Activated B cell treated with CpG ODN at 0.5 μM for 24 hours (primary cell): ENCODE measurements at regions of chr17 and their contacts with region 1.

Region 1: DNA sequence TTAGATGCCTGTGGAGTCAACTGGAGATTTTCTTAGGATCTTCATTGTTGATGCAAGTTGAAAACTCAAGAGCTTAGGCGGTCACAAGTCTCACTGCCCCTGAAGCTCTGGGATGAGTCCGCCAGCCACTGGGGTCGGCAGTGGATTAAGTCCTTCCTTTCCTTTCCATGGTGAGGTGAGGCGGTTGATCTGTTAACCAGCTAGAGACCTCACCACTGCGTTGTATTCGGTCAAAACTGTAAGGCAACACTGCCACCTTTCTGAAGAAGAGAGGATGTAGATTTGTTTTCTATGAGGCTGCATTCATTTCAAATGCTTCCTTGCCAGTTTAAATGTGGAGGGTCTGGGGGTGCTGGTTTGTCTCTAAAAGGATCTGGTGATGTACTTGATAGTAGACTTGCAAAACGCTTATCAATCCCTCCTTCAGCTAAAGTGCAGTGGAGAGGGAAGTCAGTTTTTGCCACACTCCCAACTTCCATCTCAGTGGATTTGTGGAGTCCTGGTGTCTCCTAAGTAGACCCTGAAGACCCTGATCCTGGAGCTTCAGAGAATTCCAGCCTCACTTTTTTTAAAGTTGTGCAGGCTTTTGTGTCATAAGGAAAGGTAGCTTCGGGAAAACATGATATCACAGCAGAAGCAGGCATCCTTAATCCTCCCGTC is 1.7 kb downstream of the MYOCD start:
- DNase-seq: peak; percentile 15
- ATAC-seq: peak; percentile 57
- H3K4me3 Mint-ChIP-seq: peak overlapping the region; percentile 62
- H3K27ac Mint-ChIP-seq: peak overlapping the region; percentile 27
- H3K4me1 Mint-ChIP-seq: peaks cover 11% of the 10 kb centered on the region
- H3K27me3 Mint-ChIP-seq: peaks cover 48% of the 10 kb centered on the region
- CTCF ChIP-seq: no peak

Region 2: GRCh38 chr17:10875979-10876555 is 1791.4 kb before region 1 on chr17:
- CTCF ChIA-PET with region 1: no interaction called
- POLR2A ChIA-PET with region 1: no interaction called
- intact Hi-C with region 1: loop called (anchors 10 kb)
- DNase-seq: no peak
- ATAC-seq: no peak
- H3K4me3 Mint-ChIP-seq: no peak overlapping the region
- H3K27ac Mint-ChIP-seq: no peak overlapping the region
- H3K4me1 Mint-ChIP-seq: no peaks in the 10 kb centered on the region
- H3K27me3 Mint-ChIP-seq: peaks cover 20% of the 10 kb centered on the region
- CTCF ChIP-seq: no peak

Region 3: GRCh38 chr17:12256380-12256995 is 410.9 kb before region 1 on chr17:
- CTCF ChIA-PET with region 1: interaction called, 69 read pairs
- POLR2A ChIA-PET with region 1: interaction called, 3 read pairs
- intact Hi-C with region 1: loop called (anchors 1 kb)
- DNase-seq: no peak
- ATAC-seq: peak; percentile 69
- H3K4me3 Mint-ChIP-seq: no peak overlapping the region
- H3K27ac Mint-ChIP-seq: no peak overlapping the region
- H3K4me1 Mint-ChIP-seq: peaks cover 6% of the 10 kb centered on the region
- H3K27me3 Mint-ChIP-seq: no peaks in the 10 kb centered on the region
- CTCF ChIP-seq: peak; percentile 13

Region 4: DNA sequence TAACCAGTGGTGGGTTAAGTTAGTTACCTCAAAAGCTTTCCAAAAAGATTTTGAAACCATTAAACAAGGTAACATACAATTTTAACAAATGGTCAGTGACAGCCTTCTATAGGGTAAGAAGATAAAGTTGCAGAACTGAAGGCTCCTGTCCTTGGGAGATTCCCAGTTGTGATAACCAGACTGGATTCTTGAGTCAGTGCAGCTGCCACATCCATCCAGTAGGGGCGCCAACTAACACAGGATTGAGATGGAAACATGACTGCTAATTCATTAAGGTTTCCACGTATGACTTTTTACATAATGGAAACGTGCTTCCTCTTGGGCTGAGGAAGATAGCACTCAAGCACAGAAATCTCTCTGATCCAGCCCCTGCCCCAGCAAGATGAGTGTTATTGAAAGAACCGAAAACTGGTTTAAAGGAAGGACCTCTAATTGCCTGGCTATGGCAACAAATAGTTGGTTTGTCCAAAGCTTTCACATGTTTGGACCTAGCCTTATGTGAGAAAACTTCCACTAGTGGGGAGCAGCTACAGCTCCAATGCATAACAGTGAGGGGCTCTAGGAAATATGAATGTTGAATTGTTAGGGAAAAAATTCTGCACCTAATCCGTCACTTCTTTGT is 271.6 kb before region 1 on chr17:
- CTCF ChIA-PET with region 1: interaction called, 3 read pairs
- POLR2A ChIA-PET with region 1: no interaction called
- intact Hi-C with region 1: loop called (anchors 1 kb)
- DNase-seq: no peak
- ATAC-seq: peak; percentile 47
- H3K4me3 Mint-ChIP-seq: no peak overlapping the region
- H3K27ac Mint-ChIP-seq: no peak overlapping the region
- H3K4me1 Mint-ChIP-seq: no peaks in the 10 kb centered on the region
- H3K27me3 Mint-ChIP-seq: no peaks in the 10 kb centered on the region
- CTCF ChIP-seq: no peak

Region 5: DNA sequence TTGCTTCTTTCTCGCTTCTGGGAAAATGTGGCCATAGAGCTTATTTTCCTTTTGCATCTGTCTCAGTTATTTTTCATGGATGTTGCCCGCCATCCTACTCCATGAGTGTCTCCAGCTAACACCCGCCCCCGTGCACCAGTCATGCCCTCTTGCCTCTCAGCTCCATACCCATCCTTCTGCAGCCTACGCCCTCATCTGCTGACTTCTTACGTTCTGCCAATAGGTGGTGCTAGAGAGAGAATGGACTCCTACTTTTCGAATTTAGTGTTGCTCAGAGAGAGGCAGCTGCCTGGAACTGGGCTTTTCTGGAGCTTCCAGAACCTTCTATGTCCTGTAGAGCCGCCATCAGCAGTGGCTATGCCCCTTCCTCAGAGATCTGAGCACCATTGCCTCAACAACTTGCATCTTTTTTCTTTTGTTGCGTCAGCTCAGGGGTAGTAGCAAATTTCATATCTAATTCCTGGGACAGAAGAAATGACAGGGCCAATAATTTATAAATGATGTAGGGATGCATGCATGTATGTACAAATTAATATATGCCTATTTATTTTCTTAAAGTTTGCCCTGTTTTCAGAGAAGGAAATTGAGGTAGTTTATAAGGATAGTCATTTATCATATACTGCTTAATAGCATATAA is 121.4 kb before region 1 on chr17:
- CTCF ChIA-PET with region 1: interaction called, 12 read pairs
- POLR2A ChIA-PET with region 1: interaction called, 5 read pairs
- intact Hi-C with region 1: loop called (anchors 2 kb)
- DNase-seq: no peak
- ATAC-seq: peak; percentile 78
- H3K4me3 Mint-ChIP-seq: no peak overlapping the region
- H3K27ac Mint-ChIP-seq: no peak overlapping the region
- H3K4me1 Mint-ChIP-seq: peaks cover 2% of the 10 kb centered on the region
- H3K27me3 Mint-ChIP-seq: no peaks in the 10 kb centered on the region
- CTCF ChIP-seq: no peak